OCI-LY7 (cell line): ENCODE measurements at regions of chr20 and their contacts with region 1.

Region 1: GRCh38 chr20:54199721-54200176 is 8.1 kb upstream of the PFDN4 start:
- DNase-seq: peak; percentile 64
- H3K4me3 ChIP-seq: no peak overlapping the region
- H3K27ac ChIP-seq: no peak overlapping the region
- H3K4me1 ChIP-seq: peaks cover 11% of the 10 kb centered on the region
- CTCF ChIP-seq: peak; percentile 97

Region 2: GRCh38 chr20:53974785-53975555 is 224.8 kb before region 1 on chr20:
- CTCF ChIA-PET with region 1: no interaction called
- POLR2A ChIA-PET with region 1: no interaction called
- intact Hi-C with region 1: loop called (anchors 10 kb)
- DNase-seq: no peak
- H3K4me3 ChIP-seq: no peak overlapping the region
- H3K27ac ChIP-seq: no peak overlapping the region
- H3K4me1 ChIP-seq: no peaks in the 10 kb centered on the region
- CTCF ChIP-seq: no peak

Region 3: DNA sequence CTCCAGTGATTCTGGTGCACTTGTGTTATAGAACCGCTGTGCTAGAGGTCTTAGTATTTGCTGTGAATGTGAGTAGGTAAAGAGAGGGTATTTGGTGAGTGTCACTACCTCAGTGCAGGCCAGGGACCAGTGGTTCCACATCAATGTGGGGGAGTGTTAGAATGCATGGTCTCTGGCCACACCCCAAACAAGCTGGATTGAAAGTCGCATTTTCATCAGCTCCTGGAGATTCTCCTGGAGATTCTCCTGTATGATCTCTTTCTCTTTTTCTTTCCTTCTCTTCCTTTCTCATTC is 102.6 kb before region 1 on chr20:
- CTCF ChIA-PET with region 1: interaction called, 3 read pairs
- POLR2A ChIA-PET with region 1: interaction called, 4 read pairs
- intact Hi-C with region 1: loop called (anchors 1 kb)
- DNase-seq: no peak
- H3K4me3 ChIP-seq: no peak overlapping the region
- H3K27ac ChIP-seq: no peak overlapping the region
- H3K4me1 ChIP-seq: no peaks in the 10 kb centered on the region
- CTCF ChIP-seq: no peak